ENCODE measurements at regions of chr7 and their contacts with region 1.

Region 1: DNA sequence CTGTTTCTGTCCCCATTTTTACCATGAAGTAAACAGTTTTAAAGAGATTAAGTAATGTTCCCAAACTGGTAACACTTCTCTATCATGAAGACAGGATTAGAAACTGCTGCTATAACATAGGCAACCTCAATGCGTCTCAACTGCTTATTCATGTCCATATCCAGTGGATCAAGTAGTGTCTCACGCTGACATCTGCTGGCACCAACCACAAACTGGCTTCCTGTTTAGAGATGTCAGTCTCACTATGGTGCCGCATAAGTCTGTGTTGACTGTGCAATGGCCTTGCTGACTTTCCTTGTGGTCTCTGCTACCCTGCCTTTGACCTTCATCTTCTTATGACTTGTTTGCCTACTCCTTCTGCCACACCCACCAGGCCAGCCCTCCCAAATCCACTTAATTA is 369.6 kb upstream of the DPP6 start:
- DNase-seq: no peak
- ATAC-seq: no peak

Region 2: DNA sequence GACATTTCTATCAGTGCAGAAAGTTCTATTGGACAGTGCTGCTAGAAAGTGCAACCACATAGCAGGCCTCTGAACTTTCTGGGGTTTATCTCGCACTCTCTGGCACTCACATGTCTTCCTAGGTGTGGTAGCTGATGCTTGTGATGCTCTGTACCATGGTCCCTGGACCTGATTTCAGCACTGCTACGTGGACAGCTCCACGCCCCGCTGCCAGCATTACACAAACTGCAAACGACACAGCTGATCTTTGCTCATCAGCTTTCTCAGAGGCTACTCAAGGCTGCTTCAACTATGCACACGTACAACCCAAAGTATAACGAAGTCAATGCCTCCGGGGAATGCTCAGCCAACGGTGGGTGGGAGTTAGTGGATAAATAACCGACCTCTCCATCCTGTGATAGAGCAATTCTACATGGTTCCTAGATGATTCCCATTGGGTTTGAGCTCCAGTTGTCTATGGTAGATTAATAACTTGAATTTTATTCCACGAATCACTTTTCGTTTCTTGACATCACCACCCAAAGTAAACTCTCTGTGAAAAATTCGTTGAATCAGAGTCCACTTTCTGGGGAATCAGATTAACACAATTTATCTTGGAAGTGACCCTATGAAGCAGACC is 620.6 kb before region 1 on chr7:
- intact Hi-C with region 1: no loop called
- DNase-seq: no peak
- ATAC-seq: no peak

Region 3: DNA sequence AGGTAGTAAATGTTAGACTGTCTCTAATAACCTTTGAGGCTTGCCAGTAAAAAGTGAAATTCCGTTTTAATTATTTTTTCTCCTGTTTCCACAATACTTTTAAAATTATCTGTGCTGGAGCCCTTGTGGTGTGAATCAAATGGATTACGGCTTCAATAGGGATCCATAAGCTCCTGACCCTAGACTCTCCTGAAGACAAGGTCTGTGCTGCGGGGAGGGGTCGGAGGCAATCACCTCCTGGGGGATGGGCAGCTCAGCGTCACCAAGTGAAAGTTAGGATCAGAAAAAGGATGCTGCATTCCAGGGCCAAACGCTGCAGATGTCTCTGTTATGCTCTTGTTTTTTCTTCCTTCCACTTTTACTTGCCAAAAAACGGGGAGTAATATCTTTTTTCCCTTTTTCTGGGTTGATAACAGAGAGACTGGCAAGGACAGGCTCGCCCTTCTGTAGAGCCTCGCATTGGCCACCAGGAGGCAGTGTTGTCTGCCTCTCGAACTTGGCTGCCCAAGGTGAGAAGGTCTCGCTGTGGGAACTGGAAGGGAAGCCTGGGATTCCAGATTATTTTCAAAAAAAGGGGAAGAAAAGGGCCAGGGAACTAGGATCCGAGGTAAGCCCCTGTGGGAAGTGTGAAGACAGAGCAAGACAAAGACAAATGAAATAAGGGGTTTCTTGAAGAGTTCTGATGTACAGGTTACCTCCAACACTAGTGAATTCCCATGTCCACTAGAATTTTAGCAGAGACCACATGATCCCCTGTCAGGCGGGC is 301.2 kb before region 1 on chr7:
- intact Hi-C with region 1: loop called (anchors 5 kb)
- DNase-seq: peak; percentile 42
- ATAC-seq: peak; percentile 86

Region 4: DNA sequence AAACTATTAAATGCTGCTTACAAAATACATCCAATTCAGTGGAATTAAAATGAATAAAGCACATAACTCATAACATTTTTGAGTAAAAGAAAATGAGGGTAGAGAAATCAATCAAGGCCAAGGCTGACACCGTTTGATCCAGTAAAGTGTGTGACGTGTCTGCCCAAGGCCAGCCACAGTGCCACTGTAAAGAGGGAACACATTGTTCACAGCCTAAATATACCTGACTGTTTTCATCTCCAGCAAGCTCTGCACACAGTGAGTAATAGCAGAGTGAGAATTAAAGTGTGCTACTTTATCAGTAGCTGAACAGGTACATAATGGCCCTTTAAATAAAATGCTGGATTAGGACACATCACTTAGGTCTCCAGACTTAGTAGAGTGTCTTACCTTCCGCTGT is 238.8 kb after region 1 on chr7:
- intact Hi-C with region 1: no loop called
- DNase-seq: no peak
- ATAC-seq: no peak